ENCODE measurements at regions of chr15 and their contacts with region 1.

Region 1: GRCh38 chr15:68304589-68305337 is 27.2 kb downstream of the FEM1B start:
- DNase-seq: no peak
- H3K4me3 Mint-ChIP-seq: no peak overlapping the region
- H3K27ac Mint-ChIP-seq: no peak overlapping the region
- H3K4me1 Mint-ChIP-seq: peaks cover 14% of the 10 kb centered on the region
- H3K27me3 Mint-ChIP-seq: no peaks in the 10 kb centered on the region

Region 2: DNA sequence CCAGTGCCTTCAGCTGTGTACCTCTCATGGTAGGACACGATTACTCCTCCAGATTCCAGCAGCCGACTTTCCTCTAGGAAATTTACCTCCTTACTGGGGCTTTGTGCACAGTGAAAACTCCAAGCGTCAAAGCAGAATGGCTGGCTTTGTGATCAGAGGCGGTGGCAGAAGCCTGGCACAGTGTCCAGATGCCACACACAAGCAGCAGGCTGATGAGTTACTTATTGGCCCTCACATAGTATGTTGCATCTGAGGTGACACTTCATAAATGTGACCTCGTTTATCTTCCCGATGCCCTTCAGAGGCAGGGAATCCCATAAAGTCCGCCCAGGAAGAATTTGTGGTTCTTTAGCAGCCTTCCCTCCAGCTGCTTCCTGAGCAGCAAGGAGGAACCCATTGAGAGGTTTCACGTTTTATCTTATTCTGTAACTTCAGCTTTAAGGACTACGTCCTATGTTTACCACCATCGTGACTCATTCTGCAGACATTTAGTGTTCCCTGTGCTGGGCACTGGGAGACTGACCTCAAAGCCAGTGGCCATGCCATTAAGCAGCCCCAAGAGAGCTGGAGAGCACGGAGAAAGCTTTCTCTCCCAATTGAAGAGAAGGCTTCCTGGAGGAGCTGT is 890.9 kb before region 1 on chr15:
- CTCF ChIA-PET with region 1: no interaction called
- intact Hi-C with region 1: no loop called
- DNase-seq: no peak
- H3K4me3 Mint-ChIP-seq: no peak overlapping the region
- H3K27ac Mint-ChIP-seq: no peak overlapping the region
- H3K4me1 Mint-ChIP-seq: no peaks in the 10 kb centered on the region
- H3K27me3 Mint-ChIP-seq: no peaks in the 10 kb centered on the region

Region 3: DNA sequence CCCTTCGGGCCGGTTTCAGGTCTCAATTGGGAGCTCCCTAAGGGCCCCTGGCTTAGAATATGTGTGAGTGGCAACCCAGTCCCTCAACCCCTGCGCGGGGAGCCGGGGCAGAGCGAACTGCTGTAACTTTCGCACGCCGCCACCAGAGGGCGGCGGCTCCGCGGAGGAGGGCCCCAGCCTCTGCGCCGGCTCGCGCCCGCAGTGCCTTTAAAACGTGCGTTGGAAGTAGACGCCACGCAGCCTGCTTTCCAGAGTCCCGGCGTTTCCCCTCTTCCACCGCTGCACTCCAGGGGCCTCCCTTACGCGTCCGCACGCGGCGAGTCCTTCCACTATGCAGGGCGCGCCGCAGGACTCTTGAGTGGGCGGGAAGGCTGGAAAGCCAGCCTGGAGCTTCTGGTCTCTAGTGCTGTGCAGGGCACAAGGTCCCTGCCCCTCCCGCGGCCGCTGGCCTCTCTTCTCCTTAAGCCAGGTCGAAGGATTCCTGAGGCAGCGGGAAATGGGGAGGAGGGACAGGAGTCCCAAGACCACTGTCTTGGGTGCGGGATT is 441.2 kb before region 1 on chr15:
- CTCF ChIA-PET with region 1: no interaction called
- intact Hi-C with region 1: loop called (anchors 10 kb)
- DNase-seq: peak; percentile 76
- H3K4me3 Mint-ChIP-seq: no peak overlapping the region
- H3K27ac Mint-ChIP-seq: no peak overlapping the region
- H3K4me1 Mint-ChIP-seq: peaks cover 3% of the 10 kb centered on the region
- H3K27me3 Mint-ChIP-seq: peaks cover 10% of the 10 kb centered on the region

Region 4: DNA sequence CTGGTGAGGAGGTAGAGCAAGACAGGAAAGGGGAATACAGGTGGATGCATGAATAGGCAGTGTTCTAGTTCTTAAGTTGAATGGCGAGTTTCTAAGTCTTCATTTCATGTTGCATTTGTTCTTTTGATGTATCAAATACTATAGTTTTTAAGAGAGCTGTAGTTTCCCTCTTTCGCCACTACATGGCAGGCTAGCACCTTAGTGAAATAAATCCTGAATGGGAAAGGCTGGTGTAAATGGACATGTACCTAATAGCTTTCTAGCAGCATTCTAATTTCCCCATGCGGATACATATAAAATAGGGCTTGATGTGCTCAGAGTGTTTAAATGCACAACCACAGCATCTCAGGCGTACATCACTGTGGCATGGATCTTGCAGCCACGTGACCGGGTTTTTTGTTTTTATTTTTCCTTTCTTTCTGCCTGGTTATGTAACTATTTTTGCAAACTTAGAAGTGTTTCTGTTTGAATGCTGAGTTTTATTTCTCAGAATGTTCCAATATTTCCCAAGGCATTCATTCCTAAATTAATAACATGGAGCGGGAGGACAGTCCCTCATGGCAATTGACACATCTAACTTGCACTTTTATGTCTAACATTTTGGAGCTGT is 51.7 kb before region 1 on chr15:
- CTCF ChIA-PET with region 1: interaction called, 84 read pairs
- intact Hi-C with region 1: loop called (anchors 1 kb)
- DNase-seq: peak; percentile 62
- H3K4me3 Mint-ChIP-seq: no peak overlapping the region
- H3K27ac Mint-ChIP-seq: no peak overlapping the region
- H3K4me1 Mint-ChIP-seq: no peaks in the 10 kb centered on the region
- H3K27me3 Mint-ChIP-seq: peaks cover 3% of the 10 kb centered on the region

Region 5: DNA sequence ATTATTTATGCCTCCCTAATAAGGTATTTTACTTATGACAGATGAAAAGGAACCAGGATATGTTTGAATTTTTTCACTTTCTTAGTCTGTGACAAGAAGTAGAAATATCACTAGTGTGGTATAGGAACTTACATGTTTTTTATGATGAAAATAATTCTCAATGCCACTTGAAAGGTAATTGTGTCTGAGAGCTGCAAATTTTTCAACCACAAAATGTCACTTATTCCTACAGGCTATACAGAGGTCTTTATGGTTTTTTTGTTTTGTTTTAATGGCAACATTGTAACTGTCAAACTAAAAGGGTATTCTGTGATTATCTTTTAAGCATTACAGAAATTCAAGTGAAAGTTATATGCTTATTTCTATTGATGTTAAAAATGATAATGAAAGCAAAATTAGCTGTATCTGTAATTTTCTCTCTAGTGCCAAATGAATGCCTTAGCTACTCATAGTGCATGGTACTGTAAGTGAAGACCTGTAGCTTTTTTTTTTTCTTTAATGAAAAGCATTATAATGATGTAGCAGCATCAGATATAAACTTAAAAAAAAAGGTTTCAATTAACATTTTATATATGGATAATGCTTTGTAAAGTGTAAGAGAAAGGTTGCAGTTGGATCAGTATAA is 12.5 kb before region 1 on chr15:
- CTCF ChIA-PET with region 1: interaction called, 15 read pairs
- intact Hi-C with region 1: no loop called
- DNase-seq: no peak
- H3K4me3 Mint-ChIP-seq: no peak overlapping the region
- H3K27ac Mint-ChIP-seq: peak overlapping the region; percentile 38
- H3K4me1 Mint-ChIP-seq: peaks cover 47% of the 10 kb centered on the region
- H3K27me3 Mint-ChIP-seq: no peaks in the 10 kb centered on the region

Region 6: GRCh38 chr15:68383161-68384074 is 78.7 kb after region 1 on chr15:
- CTCF ChIA-PET with region 1: interaction called, 85 read pairs
- intact Hi-C with region 1: loop called (anchors 1 kb)
- DNase-seq: peak; percentile 69
- H3K4me3 Mint-ChIP-seq: no peak overlapping the region
- H3K27ac Mint-ChIP-seq: no peak overlapping the region
- H3K4me1 Mint-ChIP-seq: peaks cover 13% of the 10 kb centered on the region
- H3K27me3 Mint-ChIP-seq: no peaks in the 10 kb centered on the region

Region 7: GRCh38 chr15:68537107-68537905 is 232.5 kb after region 1 on chr15:
- CTCF ChIA-PET with region 1: interaction called, 6 read pairs
- intact Hi-C with region 1: loop called (anchors 2 kb)
- DNase-seq: no peak
- H3K4me3 Mint-ChIP-seq: no peak overlapping the region
- H3K27ac Mint-ChIP-seq: no peak overlapping the region
- H3K4me1 Mint-ChIP-seq: no peaks in the 10 kb centered on the region
- H3K27me3 Mint-ChIP-seq: peaks cover 13% of the 10 kb centered on the region

Region 8: DNA sequence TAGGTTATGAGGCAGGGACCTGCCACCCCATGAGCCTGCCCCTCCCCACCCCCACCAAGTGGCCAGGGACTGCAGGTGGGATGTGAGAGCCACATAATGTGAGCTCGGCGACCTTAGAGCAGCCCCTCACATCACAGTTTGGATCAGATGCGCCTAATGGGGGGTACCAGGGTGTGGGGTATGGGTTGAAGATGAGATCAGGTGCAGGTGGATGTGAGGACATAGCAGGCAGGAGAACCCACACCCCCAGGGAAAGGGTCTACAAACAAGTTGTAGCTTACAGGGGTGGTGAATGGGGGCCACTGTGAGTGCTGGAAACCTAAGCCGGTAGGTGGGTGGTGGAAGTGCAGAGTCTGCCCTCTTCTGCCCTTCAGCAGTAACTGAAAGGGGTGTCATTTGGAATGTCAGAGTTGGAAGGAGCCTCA is 368.0 kb after region 1 on chr15:
- CTCF ChIA-PET with region 1: interaction called, 7 read pairs
- intact Hi-C with region 1: loop called (anchors 1 kb)
- DNase-seq: no peak
- H3K4me3 Mint-ChIP-seq: no peak overlapping the region
- H3K27ac Mint-ChIP-seq: no peak overlapping the region
- H3K4me1 Mint-ChIP-seq: peaks cover 3% of the 10 kb centered on the region
- H3K27me3 Mint-ChIP-seq: peaks cover 11% of the 10 kb centered on the region